OCI-LY7 (cell line): ENCODE measurements at regions of chr1 and their contacts with region 1.

Region 1: DNA sequence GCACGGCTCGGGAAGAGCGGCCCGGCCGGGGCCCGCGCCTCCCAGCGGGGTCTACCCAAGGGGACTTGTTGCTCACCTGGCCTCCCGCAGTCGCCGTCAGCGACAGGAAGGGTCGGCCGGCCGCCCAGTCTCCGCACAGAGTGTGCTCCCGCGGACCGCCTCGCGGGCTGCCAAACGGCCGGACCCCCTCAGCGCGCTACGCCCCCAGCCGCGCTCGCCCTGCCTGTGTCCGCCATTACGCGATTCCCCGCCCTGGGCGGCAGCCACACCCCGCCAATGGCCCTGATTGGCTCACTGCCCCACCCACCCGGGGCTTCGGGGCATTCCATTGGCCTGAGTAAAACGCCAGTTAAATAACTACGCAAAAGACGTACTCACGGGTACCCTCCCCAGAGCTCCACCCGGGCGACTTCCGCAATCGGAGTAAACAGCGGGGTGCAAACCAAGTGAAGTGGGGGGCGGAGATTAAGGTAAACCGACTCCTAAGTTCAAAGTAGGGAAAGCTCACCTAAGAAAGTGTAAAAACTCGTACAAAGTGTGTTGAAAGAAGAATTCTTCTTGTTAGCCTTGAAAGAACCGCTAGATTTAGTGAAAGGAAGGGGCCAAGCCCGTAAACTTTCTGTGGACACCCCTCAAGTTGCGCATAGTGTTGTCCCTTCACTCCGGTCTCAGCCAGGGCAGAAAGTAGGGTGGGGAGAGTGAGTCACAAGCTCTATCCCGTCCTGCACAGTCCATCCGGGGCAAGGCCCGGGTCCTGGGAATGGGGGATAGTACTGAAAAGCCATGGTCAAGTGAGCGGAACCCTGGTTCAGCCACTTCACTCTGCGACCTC is at the start of gene WASF2:
- DNase-seq: peak; percentile 100
- H3K4me3 ChIP-seq: peak within 1 kb of the TSS; percentile 95
- H3K27ac ChIP-seq: peak within 1 kb of the TSS; percentile 76
- H3K4me1 ChIP-seq: peaks cover 46% of the 10 kb centered on the region
- CTCF ChIP-seq: no peak
- total RNA-seq, gene WASF2: 25.1 and 26.9 TPM in 2 replicates

Region 2: DNA sequence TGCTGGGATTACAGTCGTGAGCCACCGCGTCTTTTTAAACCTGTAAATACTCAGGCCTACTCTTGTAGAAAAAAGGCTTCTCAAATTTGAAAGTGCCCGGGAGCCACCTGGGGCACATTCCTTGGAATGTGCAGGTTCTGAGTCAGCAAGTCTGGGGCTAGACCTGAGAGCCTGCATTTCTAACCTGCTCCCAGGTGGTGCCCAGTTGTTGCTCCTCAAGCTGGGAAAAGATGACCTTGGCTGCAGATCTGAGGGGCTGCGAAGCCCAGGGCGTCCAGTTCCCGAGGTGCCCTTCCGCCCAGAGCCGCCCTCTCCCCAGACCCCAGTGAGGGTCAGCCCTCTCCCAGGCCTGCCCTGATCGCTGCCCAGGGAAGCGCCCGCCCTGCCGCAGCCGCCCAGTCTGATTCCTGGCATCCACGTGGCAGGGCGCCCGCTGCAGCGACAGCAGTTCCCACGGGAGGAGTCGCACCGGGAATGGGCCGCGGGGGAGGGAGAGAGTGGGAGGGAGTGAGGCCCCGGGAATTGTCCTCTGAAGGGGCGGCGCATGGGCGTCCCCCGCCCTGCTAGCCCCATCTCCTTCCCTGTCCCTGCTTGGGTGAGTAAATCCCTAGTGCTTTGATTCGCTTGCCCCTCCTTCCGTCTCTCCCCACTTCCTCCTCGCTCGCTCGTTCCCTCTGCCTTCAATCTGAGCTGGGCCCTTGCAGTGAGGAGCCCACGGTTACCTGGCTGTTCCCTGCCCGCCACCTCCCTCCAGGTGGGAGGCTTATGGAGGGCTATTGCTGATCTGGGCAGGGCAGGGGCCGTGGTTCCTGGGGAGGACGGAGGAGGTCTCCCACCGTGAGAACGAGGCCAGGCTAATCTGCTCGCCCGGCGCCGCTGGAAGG is 458.6 kb before region 1 on chr1:
- CTCF ChIA-PET with region 1: no interaction called
- POLR2A ChIA-PET with region 1: no interaction called
- intact Hi-C with region 1: no loop called
- DNase-seq: no peak
- H3K4me3 ChIP-seq: no peak overlapping the region
- H3K27ac ChIP-seq: no peak overlapping the region
- H3K4me1 ChIP-seq: no peaks in the 10 kb centered on the region
- CTCF ChIP-seq: no peak

Region 3: GRCh38 chr1:27402349-27402754 is 87.8 kb before region 1 on chr1:
- CTCF ChIA-PET with region 1: interaction called, 3 read pairs
- POLR2A ChIA-PET with region 1: interaction called, 3 read pairs
- intact Hi-C with region 1: loop called (anchors 1 kb)
- DNase-seq: no peak
- H3K4me3 ChIP-seq: no peak overlapping the region
- H3K27ac ChIP-seq: peak overlapping the region; percentile 86
- H3K4me1 ChIP-seq: peaks cover 53% of the 10 kb centered on the region
- CTCF ChIP-seq: no peak

Region 4: DNA sequence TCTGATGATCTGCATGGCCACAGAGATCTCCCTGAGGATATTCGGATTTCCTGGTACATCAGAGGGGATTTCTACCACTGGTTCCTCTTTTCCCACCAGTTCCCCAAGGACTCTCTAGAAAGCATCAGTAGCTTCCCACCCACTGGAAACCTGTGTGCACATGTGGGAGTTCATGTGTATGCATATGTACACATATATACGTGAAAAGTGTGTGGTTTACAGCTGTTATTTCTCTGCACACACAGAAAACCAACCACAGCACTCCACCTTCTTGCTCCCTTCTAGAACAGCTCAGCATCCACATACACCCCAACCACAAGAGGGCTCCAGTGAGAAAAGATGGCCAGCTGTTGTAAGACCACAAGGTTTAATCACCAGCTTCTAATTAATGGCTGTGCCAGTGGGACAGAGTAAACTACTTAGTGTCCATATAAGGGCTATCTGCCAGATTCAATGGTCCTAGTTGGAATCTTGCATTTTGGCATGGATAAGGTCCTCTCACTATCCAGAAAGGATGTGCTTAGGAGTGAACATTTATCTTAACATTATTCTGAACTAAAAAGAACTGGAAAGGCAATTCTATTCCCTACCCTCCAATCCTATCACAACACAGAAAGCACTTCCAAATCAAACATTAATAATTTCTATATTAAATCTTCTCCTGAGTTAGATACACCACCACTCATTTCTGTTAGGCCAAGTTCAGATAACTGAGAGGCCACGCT is 73.6 kb before region 1 on chr1:
- CTCF ChIA-PET with region 1: no interaction called
- POLR2A ChIA-PET with region 1: interaction called, 4 read pairs
- intact Hi-C with region 1: loop called (anchors 2 kb)
- DNase-seq: peak; percentile 81
- H3K4me3 ChIP-seq: no peak overlapping the region
- H3K27ac ChIP-seq: peak overlapping the region; percentile 25
- H3K4me1 ChIP-seq: peaks cover 34% of the 10 kb centered on the region
- CTCF ChIP-seq: peak; percentile 95

Region 5: DNA sequence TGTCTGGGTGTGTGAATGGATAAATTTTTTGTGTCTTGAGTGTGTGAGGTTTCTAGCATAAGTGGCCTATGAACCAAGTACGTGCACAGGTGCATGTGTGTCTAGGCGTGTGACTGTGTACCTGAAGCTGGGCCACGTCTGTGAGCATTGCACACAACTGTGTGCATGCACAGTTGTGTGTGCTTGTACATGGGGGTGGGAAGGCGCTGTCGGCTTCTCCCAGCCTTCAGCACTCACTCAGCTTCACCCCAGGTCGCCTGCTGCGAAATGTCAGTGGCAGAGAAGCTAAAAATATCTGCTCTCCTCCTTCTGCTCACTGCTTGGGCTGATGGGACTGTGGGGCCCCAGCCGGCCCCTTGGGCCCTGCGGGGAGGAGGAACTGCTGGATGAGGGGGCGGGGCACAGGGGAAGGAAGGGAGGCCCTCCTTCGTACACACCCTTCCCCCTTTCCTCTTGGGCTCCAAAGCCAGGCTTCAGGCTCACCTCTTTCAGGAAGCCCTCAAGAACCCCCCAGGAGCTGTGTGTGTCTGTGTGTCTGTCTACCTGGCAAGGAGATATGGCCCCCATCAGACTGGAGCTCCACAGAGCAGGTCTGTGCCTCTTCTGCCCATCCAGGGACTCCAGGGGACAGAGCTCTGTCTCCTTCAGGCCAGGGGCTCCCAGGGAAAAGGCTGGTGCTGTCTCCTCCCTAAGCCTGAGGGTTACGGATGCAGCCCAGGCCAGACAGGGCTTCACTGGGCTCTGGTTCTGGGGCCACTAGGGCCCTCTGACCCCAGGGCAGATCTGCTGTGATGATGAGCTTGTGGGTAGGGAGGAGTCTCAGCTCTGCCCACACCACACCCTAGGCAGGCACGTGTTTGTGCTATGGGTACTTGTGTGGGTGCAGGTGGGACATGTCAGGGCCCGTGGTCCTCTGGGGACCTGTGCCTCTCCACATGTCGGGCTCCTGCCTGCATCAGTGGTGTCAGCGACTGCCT is 35.5 kb after region 1 on chr1:
- CTCF ChIA-PET with region 1: no interaction called
- POLR2A ChIA-PET with region 1: interaction called, 3 read pairs
- intact Hi-C with region 1: loop called (anchors 2 kb)
- DNase-seq: peak; percentile 87
- H3K4me3 ChIP-seq: peak overlapping the region; percentile 60
- H3K27ac ChIP-seq: peak overlapping the region; percentile 74
- H3K4me1 ChIP-seq: peaks cover 65% of the 10 kb centered on the region
- CTCF ChIP-seq: no peak